CD4-positive, alpha-beta T cell (primary cell): ENCODE measurements at regions of chr11 and their contacts with region 1.

Region 1: DNA sequence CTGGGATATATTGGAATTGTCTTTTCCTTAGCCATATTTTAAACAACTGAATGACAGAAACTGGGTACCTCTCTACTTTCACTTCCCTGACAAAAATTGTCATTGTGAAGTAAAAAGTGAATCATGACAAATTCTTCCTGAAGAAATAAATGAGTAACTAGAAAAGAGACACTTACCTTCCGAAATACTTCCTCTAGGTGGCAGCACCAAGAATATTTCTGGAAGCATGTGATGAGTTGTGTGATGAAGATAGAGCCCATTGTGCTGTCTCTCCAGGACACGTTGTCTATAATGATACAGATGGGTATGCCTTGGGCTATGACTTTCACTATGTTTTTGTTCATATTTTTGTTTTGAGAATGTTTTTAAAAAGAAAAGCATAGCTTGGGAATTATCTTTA is 21.5 kb downstream of the CASP4 start:
- DNase-seq: peak in 5 of 14 experiments; percentile 8 to 76 (median 71)
- ATAC-seq: peak; percentile 86
- H3K4me3 ChIP-seq: no peak overlapping the region
- H3K4me3 Mint-ChIP-seq: no peak overlapping the region
- H3K27ac ChIP-seq: no peak overlapping the region
- H3K27ac Mint-ChIP-seq: peak overlapping the region; percentile 2
- H3K4me1 ChIP-seq: no peaks in the 10 kb centered on the region
- H3K4me1 Mint-ChIP-seq: peaks cover 23% of the 10 kb centered on the region
- H3K27me3 ChIP-seq: no peaks in the 10 kb centered on the region
- H3K27me3 Mint-ChIP-seq: no peaks in the 10 kb centered on the region
- CTCF ChIP-seq: peak; percentile 71

Region 2: GRCh38 chr11:104979849-104980248 is 32.9 kb after region 1 on chr11:
- CTCF ChIA-PET with region 1: no interaction called
- POLR2A ChIA-PET with region 1: no interaction called
- intact Hi-C with region 1: no loop called
- DNase-seq: no peak
- ATAC-seq: no peak
- H3K4me3 ChIP-seq: no peak overlapping the region
- H3K4me3 Mint-ChIP-seq: no peak overlapping the region
- H3K27ac ChIP-seq: no peak overlapping the region
- H3K27ac Mint-ChIP-seq: no peak overlapping the region
- H3K4me1 ChIP-seq: no peaks in the 10 kb centered on the region
- H3K4me1 Mint-ChIP-seq: no peaks in the 10 kb centered on the region
- H3K27me3 ChIP-seq: no peaks in the 10 kb centered on the region
- H3K27me3 Mint-ChIP-seq: no peaks in the 10 kb centered on the region
- CTCF ChIP-seq: no peak

Region 3: DNA sequence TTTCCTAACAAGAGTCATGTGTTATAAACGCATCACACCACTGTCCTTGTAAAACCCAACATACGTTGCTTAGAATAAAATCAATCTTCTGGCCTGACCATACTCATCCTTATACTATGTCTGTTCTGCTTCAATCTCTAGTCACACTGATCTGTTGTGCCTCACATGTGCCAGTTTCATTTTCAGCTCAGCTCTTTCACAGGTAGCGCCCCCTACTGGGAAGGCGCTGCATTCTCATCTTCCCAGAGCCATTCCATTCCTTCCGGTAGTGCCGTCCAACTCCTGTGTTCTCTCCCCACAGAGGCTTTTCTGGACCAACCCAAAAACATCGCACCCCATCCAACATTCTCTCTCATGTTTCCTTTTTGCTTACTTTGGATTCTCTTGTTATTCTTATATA is 53.9 kb after region 1 on chr11:
- CTCF ChIA-PET with region 1: no interaction called
- POLR2A ChIA-PET with region 1: no interaction called
- intact Hi-C with region 1: loop called in 1 of 2 experiments (anchors 5 kb)
- DNase-seq: peak; percentile 17 to 73 (median 40)
- ATAC-seq: peak; percentile 82
- H3K4me3 ChIP-seq: no peak overlapping the region
- H3K4me3 Mint-ChIP-seq: no peak overlapping the region
- H3K27ac ChIP-seq: no peak overlapping the region
- H3K27ac Mint-ChIP-seq: no peak overlapping the region
- H3K4me1 ChIP-seq: no peaks in the 10 kb centered on the region
- H3K4me1 Mint-ChIP-seq: peaks cover 6% of the 10 kb centered on the region
- H3K27me3 ChIP-seq: no peaks in the 10 kb centered on the region
- H3K27me3 Mint-ChIP-seq: no peaks in the 10 kb centered on the region
- CTCF ChIP-seq: peak; percentile 72